Mammary epithelial cell (primary cell): ENCODE measurements at regions of chr20 and their contacts with region 1.

Region 1: DNA sequence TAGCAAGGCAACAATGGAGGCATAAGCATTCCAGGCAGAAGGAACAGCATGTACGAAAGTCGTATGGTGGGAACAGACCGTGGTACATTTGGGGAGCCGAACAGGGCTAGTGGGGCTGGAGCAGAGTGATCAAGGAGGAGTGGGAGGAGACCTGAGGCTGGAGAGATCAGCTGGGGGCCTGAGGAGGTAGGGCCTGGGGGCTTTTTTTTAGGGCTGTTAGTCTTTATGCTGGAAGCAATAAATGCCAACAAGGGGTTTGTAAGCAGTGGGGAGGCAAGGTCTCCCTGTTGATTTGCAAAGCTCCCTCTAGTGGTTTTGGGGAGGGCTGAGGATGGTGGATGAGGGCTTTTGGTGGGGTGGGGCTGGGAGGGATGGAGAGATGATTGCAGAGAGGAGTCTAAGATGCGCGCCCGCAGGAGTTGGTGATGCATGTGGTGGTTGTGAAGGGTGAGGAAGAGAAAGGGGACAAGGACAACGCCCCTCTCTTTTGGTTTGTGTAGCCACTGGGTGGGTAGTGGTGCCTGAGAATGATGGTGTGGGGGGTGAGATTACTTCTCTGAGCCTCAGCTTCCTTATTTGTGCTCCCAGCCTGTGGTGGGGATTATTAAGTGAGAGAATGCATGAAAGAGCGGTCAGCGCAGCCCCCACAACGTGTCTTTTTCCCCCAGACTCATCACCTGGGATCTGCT is 74.1 kb upstream of the TOX2 start:
- DNase-seq: no peak
- H3K4me3 ChIP-seq: no peak overlapping the region
- H3K27ac ChIP-seq: no peak overlapping the region
- H3K4me1 ChIP-seq: peaks cover 7% of the 10 kb centered on the region
- H3K27me3 ChIP-seq: no peaks in the 10 kb centered on the region
- CTCF ChIP-seq: peak; percentile 22 to 54

Region 2: DNA sequence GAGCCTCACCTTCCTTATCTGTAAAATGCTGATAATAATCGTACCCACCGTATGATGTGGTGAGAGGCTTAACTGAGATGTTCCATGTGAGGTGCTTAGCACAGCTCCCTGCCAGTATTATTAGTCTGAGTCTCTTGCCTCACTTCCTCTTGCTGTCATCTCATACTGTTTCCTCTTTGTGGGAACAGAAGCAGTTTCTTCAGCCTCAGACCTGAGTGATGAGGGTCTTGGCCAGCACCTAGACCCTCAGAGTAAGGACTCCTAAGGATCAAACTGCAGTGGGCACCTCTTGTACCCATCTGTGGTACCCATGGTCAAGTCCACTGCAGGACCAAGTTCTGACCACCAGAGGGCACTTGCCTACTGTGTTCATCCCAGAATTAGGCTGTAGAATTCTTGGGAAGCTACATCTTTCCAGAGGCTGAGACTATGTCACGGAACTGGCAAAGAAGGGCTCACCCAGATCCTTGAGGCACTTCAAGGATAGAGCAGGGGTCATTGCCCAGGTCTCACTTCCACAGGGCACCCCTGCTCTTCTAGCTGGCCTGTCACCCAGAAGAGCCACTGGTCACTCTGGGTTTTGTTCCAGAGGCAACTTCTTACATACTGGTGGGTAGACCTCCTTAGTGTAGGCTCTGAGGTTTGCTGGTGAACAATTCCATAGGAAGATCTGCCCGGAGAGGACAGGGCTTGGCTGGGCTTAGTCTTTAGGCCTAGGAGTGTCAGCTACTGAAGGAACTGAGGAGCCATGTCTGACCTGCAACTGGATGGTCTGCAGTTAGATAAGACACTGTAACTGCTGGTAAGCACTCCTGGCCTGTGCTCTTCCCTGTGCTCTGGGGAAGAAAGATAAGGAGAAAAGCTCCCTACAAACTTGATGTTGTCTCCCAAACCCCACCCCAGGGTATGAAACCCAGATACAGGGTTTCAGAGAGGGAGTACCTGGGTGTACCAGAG is 302.3 kb before region 1 on chr20:
- CTCF ChIA-PET with region 1: no interaction called
- dilution Hi-C with region 1: no loop called
- in situ Hi-C with region 1: no loop called
- intact Hi-C with region 1: loop called (anchors 5 kb)
- DNase-seq: peak; percentile 39
- H3K4me3 ChIP-seq: no peak overlapping the region
- H3K27ac ChIP-seq: no peak overlapping the region
- H3K4me1 ChIP-seq: peaks cover 11% of the 10 kb centered on the region
- H3K27me3 ChIP-seq: no peaks in the 10 kb centered on the region
- CTCF ChIP-seq: peak; percentile 96 to 97

Region 3: DNA sequence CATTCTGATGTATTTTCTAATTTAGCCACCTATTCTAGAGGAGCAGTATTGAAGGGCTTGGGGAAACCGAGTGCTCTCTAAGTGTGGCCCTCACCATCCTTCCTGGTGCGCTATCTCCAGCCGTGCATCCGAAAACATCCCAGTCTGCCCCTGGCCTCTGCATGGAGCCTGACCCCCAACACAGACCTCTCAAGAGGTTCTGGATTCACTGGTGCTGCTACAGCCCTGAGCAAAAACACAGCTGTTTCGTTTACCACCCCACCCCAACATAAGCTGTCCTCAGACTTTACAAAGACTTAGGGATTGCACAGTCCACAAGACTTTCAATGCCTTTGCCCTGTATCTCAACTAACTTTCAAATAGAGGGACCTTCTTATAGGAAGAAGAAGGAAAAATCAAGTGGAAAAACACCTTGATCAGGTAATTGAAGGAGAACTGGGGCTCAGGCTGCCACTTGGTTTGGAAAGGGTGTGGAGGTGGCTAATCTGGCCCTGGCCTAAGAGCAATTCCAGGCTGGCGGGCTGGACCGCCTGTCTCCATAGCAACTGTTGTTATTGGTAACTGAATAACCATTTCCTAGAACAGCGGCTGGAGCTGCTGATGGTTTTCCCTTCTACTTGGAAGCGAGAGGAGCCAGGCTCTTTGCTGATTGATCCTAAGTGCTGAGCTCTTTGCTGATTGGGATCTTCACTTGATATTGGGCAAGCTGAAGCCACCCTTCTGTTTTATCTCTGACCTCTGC is 16.0 kb before region 1 on chr20:
- CTCF ChIA-PET with region 1: no interaction called
- dilution Hi-C with region 1: no loop called
- in situ Hi-C with region 1: no loop called
- intact Hi-C with region 1: loop called (anchors 2 kb)
- DNase-seq: peak; percentile 26
- H3K4me3 ChIP-seq: no peak overlapping the region
- H3K27ac ChIP-seq: no peak overlapping the region
- H3K4me1 ChIP-seq: peaks cover 13% of the 10 kb centered on the region
- H3K27me3 ChIP-seq: no peaks in the 10 kb centered on the region
- CTCF ChIP-seq: no peak

Region 4: DNA sequence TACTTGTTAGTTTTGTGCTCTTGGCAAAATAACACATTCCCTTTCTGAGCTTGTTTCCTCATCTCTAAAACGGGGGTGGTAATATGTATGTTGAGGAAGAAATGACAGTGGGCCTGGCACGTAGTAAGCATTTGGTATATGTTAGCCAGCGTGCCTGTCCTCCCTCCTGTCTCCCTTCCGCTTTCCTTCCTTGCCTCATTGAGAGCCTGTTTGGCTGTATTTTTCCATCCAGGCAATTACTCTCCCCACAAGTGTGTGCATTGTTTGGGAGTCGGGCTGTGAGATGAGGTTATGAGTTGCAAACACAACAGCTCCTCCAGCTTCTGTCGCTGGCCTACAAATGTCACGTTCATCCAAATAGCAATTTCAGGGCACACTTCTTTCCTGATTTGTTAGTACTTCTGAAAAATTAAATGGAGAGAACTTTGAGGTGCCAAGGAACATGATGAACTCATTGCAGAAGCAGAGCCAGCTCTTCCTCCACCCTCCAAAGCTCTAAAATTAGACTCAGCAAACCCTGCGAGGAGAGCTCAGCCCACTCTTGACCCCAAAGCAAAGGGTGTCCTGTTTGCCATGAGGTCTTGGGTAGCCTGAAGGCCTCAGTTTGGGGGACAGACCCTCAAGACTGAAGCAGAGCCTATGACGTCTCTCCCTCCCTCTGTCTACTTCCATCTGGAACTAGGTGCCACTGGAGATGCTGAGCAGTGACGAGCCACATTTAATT is 23.5 kb after region 1 on chr20:
- CTCF ChIA-PET with region 1: no interaction called
- dilution Hi-C with region 1: no loop called
- in situ Hi-C with region 1: no loop called
- intact Hi-C with region 1: no loop called
- DNase-seq: no peak
- H3K4me3 ChIP-seq: no peak overlapping the region
- H3K27ac ChIP-seq: no peak overlapping the region
- H3K4me1 ChIP-seq: no peaks in the 10 kb centered on the region
- H3K27me3 ChIP-seq: no peaks in the 10 kb centered on the region
- CTCF ChIP-seq: no peak

Region 5: DNA sequence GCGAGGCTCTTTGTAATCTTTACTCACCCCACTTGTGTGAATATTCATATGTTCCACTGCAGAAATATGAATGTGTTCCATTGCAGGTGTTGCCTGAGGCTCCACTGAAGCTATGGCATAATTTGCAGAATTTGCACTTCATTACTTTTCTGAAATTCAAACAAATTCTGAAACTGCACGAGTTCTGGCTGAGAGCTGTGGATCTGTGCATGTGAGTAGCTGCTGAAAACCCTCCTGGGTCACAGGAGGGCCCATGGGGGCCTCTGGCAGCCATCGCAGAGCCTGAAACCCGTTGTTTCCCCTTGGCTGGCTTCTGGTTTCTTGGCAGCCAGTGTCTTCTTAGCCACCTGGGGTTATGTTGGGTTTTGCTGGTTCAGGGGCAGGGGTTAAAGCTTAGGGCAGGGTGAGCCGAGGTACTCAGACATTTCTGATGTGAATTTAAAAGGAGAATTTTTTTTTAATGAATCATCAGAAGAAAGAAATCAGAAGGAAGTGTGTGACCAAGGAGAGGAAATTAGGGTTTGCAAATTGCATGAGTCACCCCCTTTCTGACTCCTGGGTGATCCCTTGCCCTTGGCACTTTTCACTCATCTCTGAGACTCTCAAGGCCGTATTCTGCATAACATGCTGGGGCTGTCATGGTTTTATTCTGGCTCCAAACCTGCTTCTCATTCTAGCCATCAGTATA is 114.7 kb after region 1 on chr20:
- CTCF ChIA-PET with region 1: no interaction called
- dilution Hi-C with region 1: no loop called
- in situ Hi-C with region 1: no loop called
- intact Hi-C with region 1: loop called (anchors 10 kb)
- DNase-seq: peak; percentile 89
- H3K4me3 ChIP-seq: no peak overlapping the region
- H3K27ac ChIP-seq: peak overlapping the region; percentile 40
- H3K4me1 ChIP-seq: peaks cover 36% of the 10 kb centered on the region
- H3K27me3 ChIP-seq: no peaks in the 10 kb centered on the region
- CTCF ChIP-seq: no peak

Region 6: GRCh38 chr20:44018259-44018941 is 177.9 kb after region 1 on chr20:
- CTCF ChIA-PET with region 1: no interaction called
- dilution Hi-C with region 1: no loop called
- in situ Hi-C with region 1: no loop called
- intact Hi-C with region 1: loop called (anchors 10 kb)
- DNase-seq: peak; percentile 87
- H3K4me3 ChIP-seq: no peak overlapping the region
- H3K27ac ChIP-seq: no peak overlapping the region
- H3K4me1 ChIP-seq: no peaks in the 10 kb centered on the region
- H3K27me3 ChIP-seq: no peaks in the 10 kb centered on the region
- CTCF ChIP-seq: no peak